ENCODE measurements at regions of chr5 and their contacts with region 1.

Region 1: DNA sequence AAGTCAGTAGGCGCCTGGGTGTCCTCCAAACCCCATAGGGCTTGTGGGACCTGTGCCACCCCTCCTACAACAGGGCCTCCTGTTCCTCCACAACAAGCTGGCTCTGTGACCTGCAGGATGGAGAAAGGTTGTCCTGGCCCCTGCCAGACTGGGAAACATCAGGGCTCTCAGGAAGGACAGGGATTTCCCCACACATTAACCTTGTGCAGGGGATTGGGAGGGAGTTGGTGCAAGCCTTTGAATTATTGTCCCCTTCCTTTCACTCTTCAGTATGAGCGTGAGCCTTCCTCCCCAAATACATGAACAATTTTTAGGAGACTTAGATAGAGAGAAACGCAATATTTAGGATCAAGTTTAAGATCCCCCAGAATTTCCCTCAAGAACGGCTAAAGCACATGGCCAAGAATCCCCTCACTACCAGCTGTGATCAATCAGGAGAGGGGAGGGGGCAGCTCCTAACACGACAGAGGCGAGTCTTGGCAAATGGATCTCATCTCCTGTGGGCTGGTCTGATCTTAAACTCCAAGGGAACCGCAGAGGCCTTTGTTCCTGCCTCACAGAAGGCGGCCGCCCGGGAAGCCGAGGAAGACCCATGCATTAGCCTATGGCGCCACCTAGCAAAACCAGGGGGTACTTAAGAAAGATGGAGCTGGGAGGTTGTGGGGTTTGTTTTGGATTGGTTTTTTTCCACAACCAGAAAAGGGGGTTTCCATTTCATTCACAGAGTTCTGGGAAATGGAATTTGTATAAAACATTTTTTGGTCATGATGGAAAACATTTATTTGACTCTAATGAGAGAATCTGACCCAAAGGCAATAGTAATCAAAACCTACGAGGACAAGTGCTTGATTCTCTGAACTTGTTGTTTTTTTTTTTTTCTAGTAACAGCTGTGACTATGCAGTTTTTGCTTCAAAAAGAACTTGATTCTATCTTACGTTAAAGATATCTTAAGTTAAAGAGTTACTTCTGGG is 36.1 kb upstream of the OSMR start:
- DNase-seq: peak; percentile 90
- ATAC-seq: peak; percentile 53
- H3K4me3 ChIP-seq: no peak overlapping the region
- H3K27ac ChIP-seq: no peak overlapping the region
- H3K4me1 ChIP-seq: peaks cover 41% of the 10 kb centered on the region
- H3K27me3 ChIP-seq: no peaks in the 10 kb centered on the region
- CTCF ChIP-seq: peak; percentile 97

Region 2: DNA sequence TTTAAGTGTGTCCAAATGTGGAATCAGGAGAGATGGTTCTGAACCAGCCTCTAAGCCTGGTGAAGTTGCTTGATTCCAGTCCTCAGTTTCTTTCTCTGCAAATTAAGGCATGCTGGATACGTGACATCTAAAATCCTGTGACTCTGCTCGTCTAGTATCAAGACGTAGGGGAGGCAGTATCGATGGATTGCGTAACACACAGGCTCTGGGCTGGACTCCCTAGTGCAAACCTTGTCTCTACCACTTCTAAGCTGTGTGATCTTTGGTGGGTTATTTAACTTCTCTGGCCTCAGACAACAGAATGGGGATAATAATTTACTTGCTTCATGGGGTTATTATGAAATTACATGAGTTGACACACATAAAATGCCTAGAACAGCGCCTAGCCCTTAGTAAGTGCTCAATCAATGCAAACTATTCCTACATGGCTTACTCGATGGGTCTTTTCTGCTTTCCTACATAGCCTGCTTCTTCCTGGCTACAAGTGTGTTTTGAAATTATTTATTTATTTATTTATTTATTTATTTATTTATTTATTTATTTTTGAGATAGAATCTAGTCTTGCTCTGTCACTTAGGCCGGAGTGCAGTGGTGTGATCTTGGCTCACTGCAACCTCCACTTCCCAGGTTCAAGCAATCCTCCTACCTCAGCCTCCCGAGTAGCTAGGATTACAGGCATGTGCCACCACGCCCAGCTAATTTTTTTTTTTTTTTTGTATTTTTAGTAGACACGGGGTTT is 449.2 kb before region 1 on chr5:
- CTCF ChIA-PET with region 1: no interaction called
- POLR2A ChIA-PET with region 1: no interaction called
- intact Hi-C with region 1: no loop called
- DNase-seq: no peak
- ATAC-seq: no peak
- H3K4me3 ChIP-seq: no peak overlapping the region
- H3K27ac ChIP-seq: no peak overlapping the region
- H3K4me1 ChIP-seq: no peaks in the 10 kb centered on the region
- H3K27me3 ChIP-seq: peaks cover 62% of the 10 kb centered on the region
- CTCF ChIP-seq: no peak

Region 3: DNA sequence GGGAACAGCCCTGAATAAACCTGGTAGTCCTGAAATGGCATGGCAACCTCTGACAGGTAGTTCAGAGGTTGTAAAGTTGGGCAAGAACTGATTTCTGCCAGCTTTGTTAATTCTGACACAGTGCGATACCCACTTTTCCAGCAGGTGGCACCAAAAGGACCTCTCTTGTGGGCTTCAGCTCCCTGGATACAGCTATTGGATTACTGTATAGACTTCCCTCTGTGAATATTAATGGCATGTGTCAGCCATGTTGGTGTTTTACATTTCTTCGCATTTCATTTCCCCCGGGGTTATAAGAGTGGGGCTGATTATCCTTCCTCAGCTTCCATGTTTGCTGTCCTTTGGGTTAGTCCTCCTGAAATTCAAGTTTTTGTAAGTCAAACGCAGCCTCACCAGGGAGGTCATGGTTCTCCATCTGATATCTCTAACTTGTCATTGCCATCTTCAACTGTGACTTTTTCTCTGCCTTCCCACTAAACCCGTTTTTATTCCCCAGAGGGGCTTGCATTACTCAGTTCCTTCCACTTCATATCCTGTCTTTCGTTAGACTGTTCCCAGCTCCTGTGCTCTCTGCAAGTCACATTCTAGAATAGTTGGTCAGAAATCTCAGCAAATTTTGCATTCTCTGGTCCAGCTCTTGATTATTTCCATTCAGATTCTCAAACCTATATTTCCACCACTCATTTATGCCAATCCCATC is 388.8 kb before region 1 on chr5:
- CTCF ChIA-PET with region 1: interaction called, 22 read pairs
- POLR2A ChIA-PET with region 1: no interaction called
- intact Hi-C with region 1: no loop called
- DNase-seq: peak; percentile 83
- ATAC-seq: peak; percentile 87
- H3K4me3 ChIP-seq: no peak overlapping the region
- H3K27ac ChIP-seq: no peak overlapping the region
- H3K4me1 ChIP-seq: peaks cover 5% of the 10 kb centered on the region
- H3K27me3 ChIP-seq: peaks cover 3% of the 10 kb centered on the region; the same call in 1 of the 2 replicates
- CTCF ChIP-seq: peak; percentile 92

Region 4: DNA sequence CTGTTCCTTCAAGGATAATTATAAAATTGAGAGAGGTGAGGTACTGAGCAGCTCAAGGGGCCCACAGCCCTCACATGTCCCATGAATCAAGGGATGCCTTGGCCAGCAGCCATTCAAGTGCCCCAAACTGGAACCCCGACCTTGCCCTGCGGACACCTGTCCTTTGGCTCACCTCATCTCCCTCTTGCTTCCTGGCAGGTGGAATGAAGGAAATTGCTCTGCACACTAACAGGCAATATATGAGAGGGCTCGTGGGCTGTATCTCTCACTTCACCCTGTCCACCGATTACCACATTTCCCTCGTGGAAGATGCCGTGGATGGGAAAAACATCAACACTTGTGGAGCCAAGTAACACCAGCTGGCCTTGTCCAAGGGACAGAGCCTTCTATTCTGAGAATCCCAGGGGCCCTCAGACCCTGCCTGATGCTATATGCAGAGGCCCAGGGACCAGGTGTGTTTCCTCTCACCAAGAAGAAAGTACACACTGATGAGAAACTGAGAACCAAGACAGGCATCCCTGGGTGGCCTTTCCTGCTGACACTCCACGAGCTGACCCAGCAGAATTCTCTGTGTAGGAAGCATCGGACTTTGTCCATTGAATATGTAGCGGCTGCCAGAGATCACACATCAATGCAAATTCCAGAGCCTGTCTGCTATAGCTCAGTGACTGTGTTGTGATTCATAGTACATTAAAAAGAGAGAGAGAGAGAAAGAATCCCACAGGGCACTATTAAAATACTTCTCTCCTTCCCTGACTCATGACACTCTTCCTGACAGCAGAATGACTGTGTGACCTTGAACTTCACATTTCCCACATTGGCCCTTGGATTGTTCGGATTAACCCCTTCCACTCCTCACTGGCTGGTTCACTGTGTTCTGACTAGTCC is 345.8 kb before region 1 on chr5:
- CTCF ChIA-PET with region 1: interaction called, 6 read pairs
- POLR2A ChIA-PET with region 1: interaction called, 4 read pairs
- intact Hi-C with region 1: loop called (anchors 1 kb)
- DNase-seq: peak; percentile 96
- ATAC-seq: peak; percentile 73
- H3K4me3 ChIP-seq: peak overlapping the region; percentile 14
- H3K27ac ChIP-seq: peak overlapping the region; percentile 66
- H3K4me1 ChIP-seq: peaks cover 53% of the 10 kb centered on the region
- H3K27me3 ChIP-seq: no peaks in the 10 kb centered on the region
- CTCF ChIP-seq: no peak

Region 5: DNA sequence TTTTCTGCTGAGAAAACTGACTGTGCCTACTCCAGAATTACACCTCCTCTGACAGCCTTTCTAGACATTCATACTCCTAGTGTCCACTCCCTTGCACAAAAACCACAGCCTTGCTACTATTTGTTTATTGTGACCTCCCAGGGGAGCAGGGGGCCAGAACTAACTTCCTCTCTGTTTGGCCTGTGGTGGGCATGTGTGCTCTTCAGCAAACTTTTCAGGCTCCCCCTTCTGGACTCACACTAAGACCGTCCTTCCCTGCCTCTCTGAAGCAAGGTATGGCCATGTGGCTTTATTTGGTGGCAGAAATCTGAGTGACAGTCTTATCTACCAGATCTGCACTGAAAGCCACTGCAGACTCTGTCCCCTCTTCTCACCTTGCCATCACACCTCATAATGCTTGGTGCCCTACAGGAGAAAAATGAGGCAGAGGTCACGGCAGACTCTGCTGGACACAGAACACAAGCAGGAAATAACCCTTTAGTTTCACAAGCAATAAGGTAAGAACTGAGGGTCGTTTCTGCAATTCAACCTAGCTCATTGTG is 281.4 kb before region 1 on chr5:
- CTCF ChIA-PET with region 1: no interaction called
- POLR2A ChIA-PET with region 1: no interaction called
- intact Hi-C with region 1: no loop called
- DNase-seq: no peak
- ATAC-seq: no peak
- H3K4me3 ChIP-seq: no peak overlapping the region
- H3K27ac ChIP-seq: no peak overlapping the region
- H3K4me1 ChIP-seq: no peaks in the 10 kb centered on the region
- H3K27me3 ChIP-seq: no peaks in the 10 kb centered on the region
- CTCF ChIP-seq: 0 out of 2 replicates have a peak, but pooled peaks have one; percentile 7

Region 6: GRCh38 chr5:38556599-38557305 is 252.9 kb before region 1 on chr5 and contains the start of gene LIFR:
- CTCF ChIA-PET with region 1: interaction called, 4 read pairs
- POLR2A ChIA-PET with region 1: no interaction called
- intact Hi-C with region 1: loop called (anchors 1 kb)
- DNase-seq: peak; percentile 86
- ATAC-seq: peak; percentile 81
- H3K4me3 ChIP-seq: peak within 1 kb of the TSS; percentile 84
- H3K27ac ChIP-seq: peak within 1 kb of the TSS; percentile 54
- H3K4me1 ChIP-seq: peaks cover 15% of the 10 kb centered on the region; the same call in 1 of the 2 replicates
- H3K27me3 ChIP-seq: no peaks in the 10 kb centered on the region
- CTCF ChIP-seq: no peak
- total RNA-seq, gene LIFR: 10.4 and 15.7 TPM in 2 replicates

Region 7: DNA sequence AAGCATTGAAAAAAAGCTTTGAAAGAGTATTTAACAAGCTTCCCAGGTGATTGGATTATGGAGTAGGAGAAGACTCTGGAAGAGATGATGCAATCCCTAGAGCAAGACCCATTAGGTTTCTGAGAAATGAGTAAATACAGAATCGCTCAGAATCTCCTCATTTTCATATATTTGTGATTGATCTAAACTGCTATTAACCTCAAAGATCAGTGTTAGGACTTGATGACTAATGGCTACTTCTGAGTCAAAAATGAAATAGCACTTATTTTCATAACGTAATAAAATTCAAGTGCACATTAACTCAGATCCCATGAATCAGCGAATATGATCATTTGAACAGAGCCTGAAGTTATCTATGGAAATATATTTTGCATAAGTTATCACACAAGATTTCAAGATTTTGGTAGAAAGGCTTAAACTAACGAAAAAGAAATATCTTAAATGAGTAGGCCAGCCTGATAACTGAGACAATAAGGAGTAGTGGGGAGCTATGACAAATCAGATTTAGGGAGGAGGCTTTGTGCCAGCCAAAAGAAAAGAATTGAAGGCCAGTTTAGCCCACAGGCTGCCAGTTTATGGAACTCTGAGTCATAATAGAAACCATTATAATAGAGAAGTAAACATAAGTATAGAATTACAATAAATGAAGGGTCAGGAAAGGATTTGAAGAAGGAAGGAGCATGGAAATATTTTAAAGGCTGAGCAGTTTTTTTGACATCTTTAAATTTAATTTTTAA is 70.5 kb before region 1 on chr5:
- CTCF ChIA-PET with region 1: no interaction called
- POLR2A ChIA-PET with region 1: no interaction called
- intact Hi-C with region 1: loop called (anchors 2 kb)
- DNase-seq: peak; percentile 95
- ATAC-seq: peak; percentile 97
- H3K4me3 ChIP-seq: peak overlapping the region; percentile 20; the same call in 1 of the 2 replicates
- H3K27ac ChIP-seq: peak overlapping the region; percentile 83
- H3K4me1 ChIP-seq: peaks cover 21% of the 10 kb centered on the region
- H3K27me3 ChIP-seq: no peaks in the 10 kb centered on the region
- CTCF ChIP-seq: no peak

Region 8: GRCh38 chr5:38789134-38789533 is 20.5 kb before region 1 on chr5:
- CTCF ChIA-PET with region 1: interaction called, 4 read pairs
- POLR2A ChIA-PET with region 1: interaction called, 3 read pairs
- intact Hi-C with region 1: loop called (anchors 1 kb)
- DNase-seq: peak; percentile 96
- ATAC-seq: peak; percentile 96
- H3K4me3 ChIP-seq: no peak overlapping the region
- H3K27ac ChIP-seq: peak overlapping the region; percentile 77
- H3K4me1 ChIP-seq: peaks cover 35% of the 10 kb centered on the region
- H3K27me3 ChIP-seq: no peaks in the 10 kb centered on the region
- CTCF ChIP-seq: no peak